CD4-positive, alpha-beta memory T cell (primary cell): ENCODE measurements at regions of chr17 and their contacts with region 1.

Region 1: GRCh38 chr17:39777534-39778365 is 40.0 kb downstream of the GRB7 start:
- DNase-seq: peak in 4 of 5 donors; percentile 34 to 57 (median 48)
- H3K4me3 ChIP-seq: peak overlapping the region; percentile 64 to 74
- H3K4me3 Mint-ChIP-seq: peak overlapping the region; percentile 93 to 99 (median 96)
- H3K27ac ChIP-seq: peak overlapping the region; percentile 77
- H3K27ac Mint-ChIP-seq: peak overlapping the region; percentile 89 to 98 (median 95)
- H3K4me1 ChIP-seq: peaks cover 84% of the 10 kb centered on the region
- H3K4me1 Mint-ChIP-seq: peaks cover 51 to 88% (median 69%) of the 10 kb centered on the region in 4 donors
- H3K27me3 ChIP-seq: no peaks in the 10 kb centered on the region
- H3K27me3 Mint-ChIP-seq: no peaks in the 10 kb centered on the region

Region 2: DNA sequence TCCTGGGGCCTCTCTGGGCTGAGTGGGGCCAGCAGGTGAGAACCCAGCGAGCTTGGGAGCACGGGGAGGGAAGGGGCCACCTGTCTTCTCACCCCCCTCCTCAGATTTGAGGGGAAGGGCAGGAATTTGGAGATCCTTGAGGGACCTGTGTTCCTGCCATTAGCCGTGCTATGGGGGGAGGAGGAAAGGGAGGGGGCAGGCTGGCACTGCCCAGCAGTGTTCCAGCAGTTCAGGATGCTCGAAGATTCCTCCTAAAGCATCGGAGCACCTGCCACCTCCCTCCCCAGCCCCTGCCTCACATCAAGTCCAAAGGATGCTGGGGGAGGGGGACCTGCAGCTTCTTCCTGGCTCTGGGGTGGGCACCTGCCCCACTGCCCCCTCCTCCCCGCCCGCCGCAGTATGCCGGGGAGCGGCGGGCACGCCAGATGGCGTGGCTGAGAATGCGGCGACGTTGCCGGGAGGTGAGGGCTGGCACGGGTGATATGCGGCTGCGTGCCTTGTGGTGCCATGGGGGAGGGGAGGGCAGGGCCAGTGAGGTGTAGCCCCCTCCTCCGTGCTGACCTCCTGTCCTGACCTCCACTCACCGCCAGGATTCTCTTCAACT is 165.4 kb before region 1 on chr17:
- CTCF ChIA-PET with region 1: no interaction called
- POLR2A ChIA-PET with region 1: no interaction called
- intact Hi-C with region 1: no loop called
- DNase-seq: peak in 1 of 5 donors; percentile 24
- H3K4me3 ChIP-seq: no peak overlapping the region
- H3K4me3 Mint-ChIP-seq: no peak overlapping the region
- H3K27ac ChIP-seq: no peak overlapping the region
- H3K27ac Mint-ChIP-seq: peak overlapping the region in 1 of 7 donors; percentile 60
- H3K4me1 ChIP-seq: peaks cover 6% of the 10 kb centered on the region
- H3K4me1 Mint-ChIP-seq: peaks cover 0 to 2% (median under 1%) of the 10 kb centered on the region in 4 donors
- H3K27me3 ChIP-seq: peaks cover 16% of the 10 kb centered on the region
- H3K27me3 Mint-ChIP-seq: peaks cover 13 to 31% of the 10 kb centered on the region in 2 donors

Region 3: DNA sequence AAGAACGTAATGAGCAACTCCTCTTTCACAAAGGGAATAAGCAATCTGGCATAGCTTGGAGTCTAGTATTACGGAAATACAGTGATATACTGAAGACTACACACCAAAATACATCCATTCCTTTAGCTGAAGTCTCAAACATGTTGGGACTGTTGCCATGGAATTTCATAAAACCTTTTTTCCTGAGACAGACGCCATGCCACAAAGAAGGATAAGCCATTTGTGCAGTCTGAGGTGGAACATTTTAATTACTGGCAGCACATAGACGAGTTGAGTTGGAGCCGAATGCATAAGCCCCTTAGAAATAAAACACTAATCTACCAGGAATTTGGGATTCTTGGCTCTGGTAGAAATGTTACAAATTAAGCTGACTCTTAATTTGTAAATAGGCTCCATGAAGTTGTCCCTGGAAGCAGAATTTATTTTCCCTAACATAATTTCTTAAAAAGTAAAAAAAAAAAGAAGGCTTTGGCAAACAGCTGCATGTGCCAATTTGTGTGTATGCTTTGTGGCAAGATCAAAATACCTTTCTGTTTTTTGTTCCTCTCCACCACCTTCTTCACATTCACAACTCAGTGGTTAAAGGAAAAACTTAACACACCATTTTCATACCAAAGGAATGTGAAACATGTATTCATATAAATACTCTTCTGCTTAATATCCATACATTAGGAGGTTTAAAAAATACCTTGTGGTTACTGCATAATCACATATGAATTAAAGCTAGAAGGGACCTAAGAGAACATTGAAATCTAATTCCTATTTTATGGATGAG is 14.5 kb before region 1 on chr17:
- CTCF ChIA-PET with region 1: interaction called, 3 read pairs
- POLR2A ChIA-PET with region 1: interaction called, 17 read pairs
- intact Hi-C with region 1: no loop called
- DNase-seq: no peak
- H3K4me3 ChIP-seq: no peak overlapping the region
- H3K4me3 Mint-ChIP-seq: no peak overlapping the region
- H3K27ac ChIP-seq: no peak overlapping the region
- H3K27ac Mint-ChIP-seq: peak overlapping the region in 5 of 7 donors; percentile 55 to 85 (median 70)
- H3K4me1 ChIP-seq: peaks cover 68% of the 10 kb centered on the region
- H3K4me1 Mint-ChIP-seq: peaks cover 48 to 74% (median 54%) of the 10 kb centered on the region in 4 donors
- H3K27me3 ChIP-seq: no peaks in the 10 kb centered on the region
- H3K27me3 Mint-ChIP-seq: no peaks in the 10 kb centered on the region